ENCODE measurements at regions of chr18 and their contacts with region 1.

Region 1: GRCh38 chr18:75364512-75365253 is 62.8 kb downstream of the SMIM21 start:
- DNase-seq: peak in 2 of 14 experiments; percentile 6 to 17
- ATAC-seq: no peak
- H3K4me3 ChIP-seq: no peak overlapping the region
- H3K4me3 Mint-ChIP-seq: no peak overlapping the region
- H3K27ac ChIP-seq: no peak overlapping the region
- H3K27ac Mint-ChIP-seq: no peak overlapping the region
- H3K4me1 ChIP-seq: no peaks in the 10 kb centered on the region
- H3K4me1 Mint-ChIP-seq: no peaks in the 10 kb centered on the region
- H3K27me3 ChIP-seq: peaks cover 0 to 2% of the 10 kb centered on the region in 2 experiments
- H3K27me3 Mint-ChIP-seq: peaks cover 2% of the 10 kb centered on the region
- CTCF ChIP-seq: no peak

Region 2: GRCh38 chr18:75173125-75173432 is 191.6 kb before region 1 on chr18:
- CTCF ChIA-PET with region 1: no interaction called
- POLR2A ChIA-PET with region 1: no interaction called
- intact Hi-C with region 1: loop called in 1 of 2 experiments (anchors 5 kb)
- DNase-seq: peak in 3 of 14 experiments; percentile 11 to 49 (median 44)
- ATAC-seq: no peak
- H3K4me3 ChIP-seq: no peak overlapping the region
- H3K4me3 Mint-ChIP-seq: no peak overlapping the region
- H3K27ac ChIP-seq: no peak overlapping the region
- H3K27ac Mint-ChIP-seq: no peak overlapping the region
- H3K4me1 ChIP-seq: no peaks in the 10 kb centered on the region
- H3K4me1 Mint-ChIP-seq: peaks cover 5% of the 10 kb centered on the region
- H3K27me3 ChIP-seq: no peaks in the 10 kb centered on the region
- H3K27me3 Mint-ChIP-seq: no peaks in the 10 kb centered on the region
- CTCF ChIP-seq: no peak

Region 3: DNA sequence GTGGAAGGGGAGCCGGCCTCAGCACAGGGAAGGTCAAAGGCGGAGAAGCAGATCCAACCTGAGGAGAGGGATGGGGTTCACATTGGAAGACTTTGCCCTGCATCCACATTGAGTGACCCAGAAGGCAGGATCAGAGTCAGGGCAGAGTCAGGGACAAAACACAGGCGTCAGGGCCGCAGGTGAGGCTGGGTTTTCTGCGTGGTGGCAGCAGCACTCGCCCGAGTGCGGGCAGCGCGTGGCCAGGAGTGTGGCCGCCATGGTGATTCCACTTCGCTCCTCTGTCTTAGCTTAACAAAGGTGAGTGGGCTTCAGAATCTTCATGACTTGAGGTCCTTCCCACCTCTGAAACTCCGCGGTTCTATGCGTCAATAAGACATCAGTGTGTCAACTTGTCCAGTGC is 539.7 kb after region 1 on chr18:
- CTCF ChIA-PET with region 1: no interaction called
- POLR2A ChIA-PET with region 1: no interaction called
- intact Hi-C with region 1: no loop called
- DNase-seq: no peak
- ATAC-seq: no peak
- H3K4me3 ChIP-seq: no peak overlapping the region
- H3K4me3 Mint-ChIP-seq: no peak overlapping the region
- H3K27ac ChIP-seq: no peak overlapping the region
- H3K27ac Mint-ChIP-seq: no peak overlapping the region
- H3K4me1 ChIP-seq: no peaks in the 10 kb centered on the region
- H3K4me1 Mint-ChIP-seq: no peaks in the 10 kb centered on the region
- H3K27me3 ChIP-seq: no peaks in the 10 kb centered on the region
- H3K27me3 Mint-ChIP-seq: no peaks in the 10 kb centered on the region
- CTCF ChIP-seq: no peak

Measured in CD4-positive, alpha-beta T cell (primary cell).